Right lobe of liver (tissue), 6 donors: ENCODE measurements at regions of chr6 and their contacts with region 1.

Region 1: DNA sequence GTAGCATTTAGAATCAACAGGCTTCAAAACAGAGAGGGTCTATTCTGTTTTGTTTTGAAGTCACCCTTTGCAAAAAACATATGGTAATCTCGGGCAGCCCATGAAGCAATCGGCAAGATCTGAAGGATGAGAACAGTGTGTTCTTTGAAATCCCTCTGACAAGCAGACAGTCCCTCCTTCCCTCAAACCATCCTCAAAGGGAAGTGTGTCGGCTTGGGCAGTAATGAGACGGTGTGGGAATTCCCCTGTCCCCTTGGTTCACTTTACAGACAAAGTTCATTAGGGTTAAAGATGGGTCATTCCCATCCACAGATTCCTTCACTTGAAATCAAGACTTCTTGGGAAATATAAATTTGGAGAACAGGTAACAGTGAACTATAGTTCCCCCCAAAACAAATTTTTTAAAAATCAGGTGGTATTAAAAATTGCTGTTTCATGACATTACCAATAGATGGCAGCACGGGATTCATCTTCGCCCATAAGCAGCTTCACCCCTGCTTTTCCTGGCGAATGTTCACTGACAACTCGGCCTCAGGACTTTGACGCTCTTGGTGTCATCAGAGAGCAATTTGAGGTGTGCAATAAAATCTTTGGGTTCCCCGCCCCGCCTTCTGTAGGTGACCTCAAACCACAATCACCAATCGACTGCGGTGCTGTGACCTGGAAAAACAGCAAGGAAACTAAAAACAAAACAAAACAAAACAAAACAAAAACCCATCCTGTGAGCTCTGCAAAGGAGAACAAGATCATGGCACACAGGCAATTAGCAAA is 159.3 kb upstream of the TNFAIP3 start:
- DNase-seq: peak; percentile 54 to 77 (median 68)
- ATAC-seq: peak; percentile 87 to 95 (median 90)
- H3K4me3 ChIP-seq: peak overlapping the region in 2 of 3 donors; percentile 7 to 11
- H3K27ac ChIP-seq: peak overlapping the region in 1 of 3 donors; percentile 52
- H3K4me1 ChIP-seq: peaks cover 0 to 12% (median 3%) of the 10 kb centered on the region in 4 donors
- H3K27me3 ChIP-seq: no peaks in the 10 kb centered on the region
- CTCF ChIP-seq: peak; percentile 74 to 83 (median 80)
- POLR2A ChIP-seq: no peak

Region 2: GRCh38 chr6:137866914-137867684 is 159.3 kb after region 1 on chr6 and contains the start of gene TNFAIP3:
- intact Hi-C with region 1: loop called in 1 of 2 experiments (anchors 5 kb)
- DNase-seq: peak; percentile 95 to 96 (median 96)
- ATAC-seq: peak; percentile 79 to 92 (median 90)
- H3K4me3 ChIP-seq: peak within 1 kb of the TSS; percentile 71 to 87 (median 76)
- H3K27ac ChIP-seq: peak within 1 kb of the TSS; percentile 93 to 97 (median 95)
- H3K4me1 ChIP-seq: peaks cover 0 to 33% (median 7%) of the 10 kb centered on the region in 4 donors
- H3K27me3 ChIP-seq: no peaks in the 10 kb centered on the region
- CTCF ChIP-seq: peak; percentile 75 to 98 (median 85)
- POLR2A ChIP-seq: peak; percentile 97
- total RNA-seq, gene TNFAIP3: 8.3 to 38.1 (median 13.6) TPM

Region 3: DNA sequence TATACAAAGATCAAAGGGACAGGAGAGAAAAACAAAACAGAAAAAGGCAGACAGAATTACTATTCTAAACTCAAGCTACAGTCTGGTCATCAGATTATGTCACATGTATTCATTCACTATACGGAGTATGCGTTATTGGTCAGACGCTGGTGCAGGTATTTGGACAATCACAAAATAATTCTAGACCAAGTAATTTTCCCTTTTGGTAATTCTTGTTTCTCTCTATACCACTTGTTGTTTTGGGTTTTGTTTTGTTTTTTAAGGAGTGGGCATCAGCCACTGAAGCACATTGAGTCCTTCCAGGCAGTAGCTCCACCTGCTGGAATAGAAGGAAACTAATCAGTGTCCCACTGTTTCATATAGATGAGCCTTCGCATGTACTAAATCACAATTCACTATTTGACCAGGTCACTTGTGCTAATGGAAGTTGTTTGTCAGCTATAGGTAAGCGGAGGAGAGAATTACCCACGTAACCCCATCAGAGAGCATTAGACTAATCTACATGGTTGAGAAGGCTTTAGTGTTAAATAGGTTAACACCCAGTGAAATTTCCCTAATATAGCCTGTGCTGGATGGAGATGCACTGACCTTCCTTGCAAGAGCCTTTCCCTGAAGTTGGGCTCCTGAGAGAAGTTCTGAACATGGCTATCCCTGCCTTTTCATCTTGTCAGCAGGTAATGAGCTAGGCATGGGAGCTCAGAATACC is 237.2 kb after region 1 on chr6:
- intact Hi-C with region 1: loop called (anchors 5 to 10 kb)
- DNase-seq: no peak
- ATAC-seq: peak; percentile 85 to 90 (median 88)
- H3K4me3 ChIP-seq: no peak overlapping the region
- H3K27ac ChIP-seq: no peak overlapping the region
- H3K4me1 ChIP-seq: no peaks in the 10 kb centered on the region
- H3K27me3 ChIP-seq: no peaks in the 10 kb centered on the region
- CTCF ChIP-seq: peak; percentile 78 to 93 (median 82)
- POLR2A ChIP-seq: no peak